Caco-2 (cell line): ENCODE measurements at regions of chr16 and their contacts with region 1.

Region 1: GRCh38 chr16:57185944-57186871 is at the starts of genes PSME3IP1 and RSPRY1:
- DNase-seq: peak; percentile 100
- H3K4me3 ChIP-seq: peak within 1 kb of the TSS; percentile 92
- H3K4me3 Mint-ChIP-seq: peak within 1 kb of the TSS; percentile 99
- H3K27ac Mint-ChIP-seq: peak within 1 kb of the TSS; percentile 97
- H3K4me1 ChIP-seq: peaks cover 14% of the 10 kb centered on the region; the same call in 1 of the 2 replicates
- H3K4me1 Mint-ChIP-seq: peaks cover 31% of the 10 kb centered on the region
- H3K27me3 ChIP-seq: no peaks in the 10 kb centered on the region
- H3K27me3 Mint-ChIP-seq: no peaks in the 10 kb centered on the region
- CTCF ChIP-seq: no peak
- total RNA-seq, gene PSME3IP1: 141 and 143 TPM in 2 replicates
- total RNA-seq, gene RSPRY1: 56.7 and 57.7 TPM in 2 replicates

Region 2: DNA sequence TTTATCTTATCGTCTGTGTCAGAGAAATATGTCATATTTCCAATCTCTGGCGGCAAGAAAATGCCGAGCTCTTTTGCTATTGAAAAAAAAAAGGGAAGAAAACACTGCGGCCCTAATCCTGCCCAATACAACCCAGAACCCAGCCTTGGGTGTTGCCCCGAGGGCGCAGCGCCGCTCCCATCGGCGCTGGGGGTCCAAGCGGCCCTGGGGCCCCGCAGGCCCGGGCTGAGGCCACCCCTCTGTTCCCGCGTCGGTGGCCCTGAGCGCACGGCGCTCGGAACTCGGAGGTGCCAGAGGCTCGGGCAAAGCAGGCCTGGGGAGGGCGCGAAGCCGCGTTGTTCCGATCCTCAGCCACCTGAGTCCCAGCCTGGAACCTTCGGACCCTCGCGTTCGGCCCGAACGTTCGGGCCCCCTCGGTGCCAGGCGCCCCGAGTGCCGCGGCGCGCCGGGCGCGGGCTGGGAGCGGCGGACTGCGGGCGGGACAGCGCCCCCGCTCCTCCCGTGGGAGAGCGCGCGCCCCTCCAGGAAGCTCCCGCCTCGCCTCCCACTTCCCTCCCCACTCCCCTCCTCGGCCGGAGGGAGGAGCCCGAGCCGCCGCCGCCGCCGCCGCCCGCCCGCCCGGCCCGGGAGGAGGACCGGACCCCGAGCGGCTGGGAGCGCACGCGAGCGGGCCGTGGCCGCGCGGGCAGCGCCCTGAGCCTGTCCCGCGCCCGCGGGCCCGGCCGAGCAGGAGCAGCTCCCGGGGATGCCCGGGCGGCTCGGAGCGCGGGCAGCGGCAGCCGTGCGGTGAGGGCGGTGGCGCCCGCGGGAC is 94.0 kb before region 1 on chr16 and contains the start of gene CPNE2:
- CTCF ChIA-PET with region 1: interaction called, 10 read pairs
- POLR2A ChIA-PET with region 1: interaction called, 9 read pairs
- intact Hi-C with region 1: no loop called
- DNase-seq: peak; percentile 68 to 82
- H3K4me3 ChIP-seq: peak within 1 kb of the TSS; percentile 85
- H3K4me3 Mint-ChIP-seq: peak within 1 kb of the TSS; percentile 77
- H3K27ac Mint-ChIP-seq: peak within 1 kb of the TSS; percentile 59
- H3K4me1 ChIP-seq: peaks cover 14% of the 10 kb centered on the region
- H3K4me1 Mint-ChIP-seq: peaks cover 12% of the 10 kb centered on the region
- H3K27me3 ChIP-seq: no peaks in the 10 kb centered on the region
- H3K27me3 Mint-ChIP-seq: no peaks in the 10 kb centered on the region
- CTCF ChIP-seq: peak in 1 of 2 experiments; percentile 7
- total RNA-seq, gene CPNE2: 37.7 and 46.3 TPM in 2 replicates

Region 3: GRCh38 chr16:57113042-57113453 is 73.2 kb before region 1 on chr16:
- CTCF ChIA-PET with region 1: interaction called, 15 read pairs
- POLR2A ChIA-PET with region 1: interaction called, 6 read pairs
- intact Hi-C with region 1: no loop called
- DNase-seq: no peak
- H3K4me3 ChIP-seq: no peak overlapping the region
- H3K4me3 Mint-ChIP-seq: no peak overlapping the region
- H3K27ac Mint-ChIP-seq: no peak overlapping the region
- H3K4me1 ChIP-seq: peaks cover 16% of the 10 kb centered on the region
- H3K4me1 Mint-ChIP-seq: peaks cover 17% of the 10 kb centered on the region
- H3K27me3 ChIP-seq: no peaks in the 10 kb centered on the region
- H3K27me3 Mint-ChIP-seq: no peaks in the 10 kb centered on the region
- CTCF ChIP-seq: no peak

Region 4: GRCh38 chr16:57284208-57284951 is 98.2 kb after region 1 on chr16 and contains the start of gene PLLP:
- CTCF ChIA-PET with region 1: no interaction called
- POLR2A ChIA-PET with region 1: no interaction called
- intact Hi-C with region 1: loop called (anchors 1 kb)
- DNase-seq: peak; percentile 77 to 89
- H3K4me3 ChIP-seq: peak within 1 kb of the TSS; percentile 99
- H3K4me3 Mint-ChIP-seq: peak within 1 kb of the TSS; percentile 80
- H3K27ac Mint-ChIP-seq: peak within 1 kb of the TSS; percentile 82
- H3K4me1 ChIP-seq: peaks cover 28% of the 10 kb centered on the region
- H3K4me1 Mint-ChIP-seq: peaks cover 31% of the 10 kb centered on the region
- H3K27me3 ChIP-seq: no peaks in the 10 kb centered on the region
- H3K27me3 Mint-ChIP-seq: no peaks in the 10 kb centered on the region
- CTCF ChIP-seq: no peak
- total RNA-seq, gene PLLP: 53.0 and 54.0 TPM in 2 replicates